Naive thymus-derived CD4-positive, alpha-beta T cell (primary cell): ENCODE measurements at regions of chr15 and their contacts with region 1.

Region 1: DNA sequence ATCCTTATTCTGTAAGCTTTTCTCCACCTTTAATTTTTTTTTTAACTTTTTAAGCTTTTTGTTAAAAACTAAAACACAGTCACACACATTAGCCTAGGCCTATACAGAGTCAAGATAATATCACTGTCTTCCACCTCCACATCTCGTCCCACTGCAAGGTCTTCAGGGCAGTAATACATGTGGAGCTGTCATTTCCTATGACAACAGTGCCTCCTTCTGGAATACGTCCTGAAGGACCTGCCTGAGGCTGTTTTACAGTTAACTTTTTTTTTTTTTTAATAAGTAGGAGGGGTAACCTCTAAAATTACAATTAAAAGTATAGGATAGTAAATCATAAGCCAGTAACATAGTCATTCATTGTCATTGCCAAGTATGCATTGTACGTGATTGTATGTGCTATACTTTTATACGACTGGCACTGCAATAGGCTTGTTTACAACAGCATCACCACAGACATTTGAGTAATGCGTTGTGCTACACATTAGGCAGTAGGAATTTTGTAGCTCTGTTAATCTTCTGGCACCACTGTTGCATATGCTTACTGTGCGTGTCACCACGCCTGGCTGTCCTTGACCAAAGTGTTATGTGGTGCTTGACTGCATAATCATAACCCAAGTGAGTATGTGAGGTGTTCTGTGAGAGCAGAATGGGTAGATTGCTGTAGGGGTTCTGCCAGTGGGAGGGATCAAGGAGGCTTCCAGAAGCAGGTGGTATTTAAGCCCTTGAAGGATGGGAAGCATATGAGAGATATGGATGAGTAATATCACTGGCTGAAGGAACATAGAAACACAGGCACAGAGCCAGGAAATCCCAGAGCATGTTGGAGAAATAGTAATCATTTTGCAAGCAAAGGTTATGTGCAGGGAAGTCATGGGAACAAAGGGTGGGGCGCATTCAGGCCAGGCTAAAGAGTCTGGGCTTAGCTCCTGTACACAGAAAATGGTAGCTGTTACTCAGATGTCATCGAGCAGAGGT is 18.3 kb downstream of the FBXO22 start:
- DNase-seq: peak in 6 of 9 donors; percentile 7 to 49 (median 24)
- ATAC-seq: peak; percentile 36
- H3K4me3 ChIP-seq: no peak overlapping the region
- H3K4me3 Mint-ChIP-seq: no peak overlapping the region
- H3K27ac ChIP-seq: no peak overlapping the region
- H3K27ac Mint-ChIP-seq: peak overlapping the region in 4 of 9 donors; percentile 7 to 23 (median 12)
- H3K4me1 ChIP-seq: no peaks in the 10 kb centered on the region
- H3K4me1 Mint-ChIP-seq: peaks cover 21 to 38% (median 27%) of the 10 kb centered on the region in 7 donors
- H3K27me3 ChIP-seq: no peaks in the 10 kb centered on the region
- H3K27me3 Mint-ChIP-seq: no peaks in the 10 kb centered on the region

Region 2: GRCh38 chr15:75727851-75728715 is 193.9 kb before region 1 on chr15:
- CTCF ChIA-PET with region 1: interaction called, 5 read pairs
- POLR2A ChIA-PET with region 1: no interaction called
- intact Hi-C with region 1: loop called (anchors 2 to 10 kb)
- DNase-seq: peak; percentile 52 to 71 (median 62)
- ATAC-seq: peak; percentile 75
- H3K4me3 ChIP-seq: no peak overlapping the region
- H3K4me3 Mint-ChIP-seq: no peak overlapping the region
- H3K27ac ChIP-seq: no peak overlapping the region
- H3K27ac Mint-ChIP-seq: no peak overlapping the region
- H3K4me1 ChIP-seq: no peaks in the 10 kb centered on the region
- H3K4me1 Mint-ChIP-seq: peaks cover 4 to 15% (median 12%) of the 10 kb centered on the region in 7 donors
- H3K27me3 ChIP-seq: no peaks in the 10 kb centered on the region
- H3K27me3 Mint-ChIP-seq: peaks cover 0 to 12% (median 8%) of the 10 kb centered on the region in 5 donors

Region 3: DNA sequence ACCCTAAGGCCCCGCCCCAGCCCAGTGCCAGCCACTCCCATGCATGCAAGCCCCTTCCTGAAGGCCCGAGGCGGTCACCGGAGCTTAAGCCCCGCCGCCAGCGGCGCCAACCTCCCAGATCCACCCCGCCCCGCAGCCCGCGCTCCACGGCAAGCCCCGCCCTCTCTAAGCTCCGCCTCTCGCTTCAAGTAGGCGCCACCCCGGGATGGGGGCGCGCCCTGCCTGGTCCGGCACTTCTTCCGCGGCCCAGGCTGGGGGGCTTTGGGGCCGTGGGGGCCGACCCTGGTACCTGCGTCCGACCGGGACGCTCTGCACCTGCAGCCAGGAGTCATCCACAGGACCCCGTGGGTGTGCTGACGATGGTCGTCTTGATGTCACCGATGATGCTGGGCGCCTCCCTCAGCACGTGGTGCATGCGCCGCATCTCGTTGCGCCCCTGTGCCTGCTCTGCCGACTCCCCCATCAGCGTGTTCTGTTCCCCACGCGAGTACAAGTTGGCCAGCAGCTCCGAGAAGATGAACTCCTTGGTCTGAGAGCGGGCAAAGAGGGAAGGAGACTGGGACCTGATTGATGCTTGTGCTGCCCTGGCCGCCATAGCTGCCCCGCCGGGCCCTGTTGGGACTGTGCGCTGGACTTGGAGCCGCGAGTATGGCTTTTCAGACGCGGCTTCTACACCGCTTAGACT is 183.2 kb before region 1 on chr15:
- CTCF ChIA-PET with region 1: interaction called, 9 read pairs
- POLR2A ChIA-PET with region 1: no interaction called
- intact Hi-C with region 1: loop called in 1 of 2 experiments (anchors 10 kb)
- DNase-seq: peak; percentile 81 to 92 (median 88)
- ATAC-seq: peak; percentile 97
- H3K4me3 ChIP-seq: peak overlapping the region; percentile 84
- H3K4me3 Mint-ChIP-seq: peak overlapping the region; percentile 83 to 94 (median 88)
- H3K27ac ChIP-seq: peak overlapping the region; percentile 58
- H3K27ac Mint-ChIP-seq: peak overlapping the region in 7 of 9 donors; percentile 51 to 86 (median 80)
- H3K4me1 ChIP-seq: peaks cover 0 to 6% of the 10 kb centered on the region in 2 donors
- H3K4me1 Mint-ChIP-seq: peaks cover 4 to 15% (median 12%) of the 10 kb centered on the region in 7 donors
- H3K27me3 ChIP-seq: no peaks in the 10 kb centered on the region
- H3K27me3 Mint-ChIP-seq: peaks cover 0 to 41% (median 0%) of the 10 kb centered on the region in 5 donors

Region 4: DNA sequence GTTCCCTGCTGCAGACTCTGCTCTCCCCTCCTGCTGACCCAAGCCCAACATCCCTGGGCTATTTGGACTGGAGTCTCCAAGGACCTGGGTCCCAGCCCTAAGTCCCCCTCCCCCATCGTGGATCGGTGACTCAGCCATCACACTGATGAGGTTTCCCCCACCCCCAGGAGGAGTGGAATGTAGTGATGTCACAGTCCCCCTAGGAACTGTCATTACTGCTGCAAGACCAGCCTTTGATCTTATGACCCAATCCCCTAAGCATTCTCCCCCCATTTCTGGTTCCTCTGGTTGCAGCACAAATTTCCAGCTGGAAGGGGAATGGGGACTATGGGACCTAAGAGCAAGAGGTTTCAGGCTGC is 146.0 kb before region 1 on chr15:
- CTCF ChIA-PET with region 1: no interaction called
- POLR2A ChIA-PET with region 1: no interaction called
- intact Hi-C with region 1: no loop called
- DNase-seq: no peak
- ATAC-seq: no peak
- H3K4me3 ChIP-seq: no peak overlapping the region
- H3K4me3 Mint-ChIP-seq: no peak overlapping the region
- H3K27ac ChIP-seq: no peak overlapping the region
- H3K27ac Mint-ChIP-seq: peak overlapping the region in 1 of 9 donors; percentile 71
- H3K4me1 ChIP-seq: no peaks in the 10 kb centered on the region
- H3K4me1 Mint-ChIP-seq: peaks cover 0 to 7% (median 0%) of the 10 kb centered on the region in 7 donors
- H3K27me3 ChIP-seq: no peaks in the 10 kb centered on the region
- H3K27me3 Mint-ChIP-seq: peaks cover 0 to 19% (median 0%) of the 10 kb centered on the region in 5 donors

Region 5: DNA sequence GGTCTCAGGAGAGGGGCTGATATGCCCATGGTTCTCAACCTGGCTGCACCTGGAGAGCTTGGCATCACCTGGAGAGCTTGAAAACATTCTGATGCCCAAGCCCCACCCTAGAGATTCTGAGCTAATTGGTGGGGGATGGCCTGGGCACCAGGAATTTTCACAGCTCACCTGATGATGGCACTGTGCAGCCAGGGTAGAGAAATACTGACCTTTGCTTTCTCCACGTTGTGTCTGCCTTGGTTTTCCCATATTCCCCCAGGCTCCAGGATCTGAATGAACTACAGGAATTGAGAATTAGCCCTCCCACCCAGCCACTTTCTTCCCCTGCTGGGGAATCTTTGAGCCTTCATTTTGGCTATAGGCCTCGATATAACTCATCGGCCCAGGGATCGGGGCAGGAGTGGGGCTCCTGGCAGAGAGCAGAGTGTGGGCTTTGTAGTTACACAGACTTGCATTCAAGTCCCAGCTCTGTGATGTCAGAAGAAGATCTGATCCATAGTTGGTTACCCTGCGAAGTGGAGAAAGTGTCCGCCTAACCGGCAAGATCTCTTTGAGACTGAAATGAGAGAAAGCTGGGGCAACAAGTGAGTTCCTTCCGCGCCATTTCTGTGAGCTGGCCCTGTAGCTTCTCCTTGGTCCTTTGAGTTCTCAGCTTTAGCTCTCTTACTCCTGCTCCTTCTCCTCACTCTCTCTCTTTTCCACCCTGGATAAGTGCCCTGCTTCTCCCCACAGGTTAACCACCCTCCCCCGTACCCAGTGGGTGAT is 111.8 kb before region 1 on chr15:
- CTCF ChIA-PET with region 1: interaction called, 3 read pairs
- POLR2A ChIA-PET with region 1: no interaction called
- intact Hi-C with region 1: loop called (anchors 2 to 5 kb)
- DNase-seq: peak in 1 of 9 donors; percentile 12
- ATAC-seq: peak; percentile 38
- H3K4me3 ChIP-seq: no peak overlapping the region
- H3K4me3 Mint-ChIP-seq: no peak overlapping the region
- H3K27ac ChIP-seq: no peak overlapping the region
- H3K27ac Mint-ChIP-seq: peak overlapping the region in 1 of 9 donors; percentile 56
- H3K4me1 ChIP-seq: no peaks in the 10 kb centered on the region
- H3K4me1 Mint-ChIP-seq: no peaks in the 10 kb centered on the region
- H3K27me3 ChIP-seq: no peaks in the 10 kb centered on the region
- H3K27me3 Mint-ChIP-seq: peaks cover 0 to 21% (median 6%) of the 10 kb centered on the region in 5 donors

Region 6: GRCh38 chr15:75849167-75849566 is 72.8 kb before region 1 on chr15:
- CTCF ChIA-PET with region 1: no interaction called
- POLR2A ChIA-PET with region 1: no interaction called
- intact Hi-C with region 1: no loop called
- DNase-seq: no peak
- ATAC-seq: no peak
- H3K4me3 ChIP-seq: no peak overlapping the region
- H3K4me3 Mint-ChIP-seq: peak overlapping the region in 3 of 10 donors; percentile 18 to 32 (median 23)
- H3K27ac ChIP-seq: no peak overlapping the region
- H3K27ac Mint-ChIP-seq: peak overlapping the region in 1 of 9 donors; percentile 3
- H3K4me1 ChIP-seq: peaks cover 31 to 35% of the 10 kb centered on the region in 2 donors
- H3K4me1 Mint-ChIP-seq: peaks cover 50 to 92% (median 87%) of the 10 kb centered on the region in 7 donors
- H3K27me3 ChIP-seq: no peaks in the 10 kb centered on the region
- H3K27me3 Mint-ChIP-seq: peaks cover 0 to 2% (median 0%) of the 10 kb centered on the region in 5 donors

Region 7: DNA sequence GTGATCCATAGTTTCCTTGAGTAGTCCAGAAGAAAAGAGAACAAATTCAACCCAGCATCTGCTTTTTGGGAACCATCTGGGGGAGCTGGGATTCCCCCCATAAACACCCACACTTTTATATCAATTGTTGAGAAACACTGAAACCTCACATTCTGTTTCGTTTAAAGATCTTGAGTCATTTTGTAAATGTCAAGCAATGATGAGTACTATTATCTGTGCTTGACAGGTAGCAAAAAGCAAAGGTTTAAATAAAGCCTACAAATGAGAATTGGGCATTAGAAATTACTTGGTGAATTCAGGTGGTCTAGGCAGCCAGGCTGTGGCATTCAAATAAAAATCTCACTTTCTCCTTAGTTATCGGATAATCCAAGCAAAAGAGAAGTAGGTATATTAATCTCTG is 213.5 kb after region 1 on chr15:
- CTCF ChIA-PET with region 1: no interaction called
- POLR2A ChIA-PET with region 1: no interaction called
- intact Hi-C with region 1: no loop called
- DNase-seq: no peak
- ATAC-seq: no peak
- H3K4me3 ChIP-seq: no peak overlapping the region
- H3K4me3 Mint-ChIP-seq: no peak overlapping the region
- H3K27ac ChIP-seq: no peak overlapping the region
- H3K27ac Mint-ChIP-seq: no peak overlapping the region
- H3K4me1 ChIP-seq: no peaks in the 10 kb centered on the region
- H3K4me1 Mint-ChIP-seq: peaks cover 0 to 11% (median 0%) of the 10 kb centered on the region in 7 donors
- H3K27me3 ChIP-seq: no peaks in the 10 kb centered on the region
- H3K27me3 Mint-ChIP-seq: peaks cover 0 to 29% (median 1%) of the 10 kb centered on the region in 5 donors

Region 8: DNA sequence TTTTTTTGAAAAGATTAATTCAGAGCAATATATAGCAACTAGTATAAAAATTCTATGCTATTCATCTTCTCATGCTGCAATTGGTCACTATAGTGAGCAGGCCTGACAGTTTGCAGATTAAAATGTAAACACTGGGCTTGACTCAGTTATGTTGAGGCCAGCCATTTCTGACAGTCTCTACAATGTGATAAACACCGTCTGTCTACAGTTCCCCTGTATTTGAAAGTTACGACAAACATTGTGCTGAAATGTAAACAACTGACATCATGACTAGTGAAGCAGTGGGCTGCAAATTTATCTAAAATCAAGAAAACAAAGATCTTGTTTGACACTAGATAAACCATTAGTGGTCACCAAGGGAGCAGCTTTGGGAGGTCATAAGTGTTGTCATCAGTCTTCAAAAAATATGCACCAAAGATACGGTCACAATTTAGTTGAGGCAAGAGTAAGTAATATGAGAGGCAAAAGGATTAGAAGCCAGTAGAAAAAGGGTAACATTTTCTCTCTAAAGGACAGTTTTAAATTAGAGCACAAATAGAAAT is 612.0 kb after region 1 on chr15:
- CTCF ChIA-PET with region 1: no interaction called
- POLR2A ChIA-PET with region 1: no interaction called
- intact Hi-C with region 1: no loop called
- DNase-seq: no peak
- ATAC-seq: no peak
- H3K4me3 ChIP-seq: no peak overlapping the region
- H3K4me3 Mint-ChIP-seq: no peak overlapping the region
- H3K27ac ChIP-seq: no peak overlapping the region
- H3K27ac Mint-ChIP-seq: no peak overlapping the region
- H3K4me1 ChIP-seq: no peaks in the 10 kb centered on the region
- H3K4me1 Mint-ChIP-seq: no peaks in the 10 kb centered on the region
- H3K27me3 ChIP-seq: no peaks in the 10 kb centered on the region
- H3K27me3 Mint-ChIP-seq: no peaks in the 10 kb centered on the region